CD8-positive, alpha-beta T cell (primary cell): ENCODE measurements at regions of chr19 and their contacts with region 1.

Region 1: GRCh38 chr19:1074544-1075283 is 7.7 kb downstream of the ARHGAP45 start:
- DNase-seq: peak; percentile 90 to 100 (median 97)
- ATAC-seq: peak; percentile 27
- H3K4me3 ChIP-seq: peak overlapping the region; percentile 40 to 63
- H3K4me3 Mint-ChIP-seq: peak overlapping the region; percentile 79
- H3K27ac ChIP-seq: peak overlapping the region; percentile 60 to 98
- H3K27ac Mint-ChIP-seq: peak overlapping the region; percentile 100
- H3K4me1 ChIP-seq: peaks cover 75% of the 10 kb centered on the region
- H3K4me1 Mint-ChIP-seq: peaks cover 51% of the 10 kb centered on the region
- H3K27me3 ChIP-seq: no peaks in the 10 kb centered on the region
- H3K27me3 Mint-ChIP-seq: no peaks in the 10 kb centered on the region
- CTCF ChIP-seq: no peak

Region 2: DNA sequence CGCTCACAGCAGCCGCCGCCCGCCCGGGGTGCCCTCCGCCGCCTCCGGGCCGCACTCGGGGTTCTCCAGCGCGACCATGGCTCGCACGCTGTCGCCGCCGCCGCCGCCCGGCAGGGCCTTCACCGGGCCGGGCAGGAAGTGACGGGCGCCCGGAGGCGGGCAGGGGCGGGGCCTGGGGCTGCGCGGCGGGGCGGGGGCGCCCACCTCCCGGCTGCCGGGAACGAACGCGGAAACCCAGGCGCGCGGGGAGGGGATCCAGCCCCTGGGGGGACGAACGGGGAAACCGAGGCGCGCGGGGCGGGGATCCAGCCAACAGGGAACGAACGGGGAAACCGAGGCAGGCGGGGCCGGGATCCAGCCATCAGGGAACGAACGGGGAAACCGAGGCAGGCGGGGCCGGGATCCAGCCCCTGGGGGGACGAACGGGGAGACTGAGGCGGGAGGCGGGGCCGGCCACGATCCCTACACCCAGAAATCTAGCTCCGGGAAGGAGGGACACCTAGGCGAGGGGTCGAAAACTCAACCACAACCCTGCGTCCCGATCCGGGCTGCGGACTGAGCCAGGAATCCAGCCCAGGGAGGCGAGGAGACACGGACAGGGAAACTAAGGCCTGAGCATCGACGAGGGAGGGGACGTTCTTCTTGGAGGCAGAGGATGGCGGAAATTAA is 161.5 kb before region 1 on chr19 and contains the start of gene R3HDM4:
- CTCF ChIA-PET with region 1: no interaction called
- POLR2A ChIA-PET with region 1: no interaction called
- intact Hi-C with region 1: loop called (anchors 5 kb)
- DNase-seq: peak; percentile 61 to 92 (median 85)
- ATAC-seq: peak; percentile 46
- H3K4me3 ChIP-seq: peak within 1 kb of the TSS; percentile 83 to 94
- H3K4me3 Mint-ChIP-seq: peak within 1 kb of the TSS; percentile 83
- H3K27ac ChIP-seq: peak within 1 kb of the TSS; percentile 85 to 98
- H3K27ac Mint-ChIP-seq: peak within 1 kb of the TSS; percentile 95
- H3K4me1 ChIP-seq: peaks cover 46% of the 10 kb centered on the region
- H3K4me1 Mint-ChIP-seq: peaks cover 32% of the 10 kb centered on the region
- H3K27me3 ChIP-seq: peaks cover 0 to 21% of the 10 kb centered on the region in 2 experiments
- H3K27me3 Mint-ChIP-seq: peaks cover 3% of the 10 kb centered on the region
- CTCF ChIP-seq: no peak
- total RNA-seq, gene R3HDM4: 242 to 261 TPM

Region 3: DNA sequence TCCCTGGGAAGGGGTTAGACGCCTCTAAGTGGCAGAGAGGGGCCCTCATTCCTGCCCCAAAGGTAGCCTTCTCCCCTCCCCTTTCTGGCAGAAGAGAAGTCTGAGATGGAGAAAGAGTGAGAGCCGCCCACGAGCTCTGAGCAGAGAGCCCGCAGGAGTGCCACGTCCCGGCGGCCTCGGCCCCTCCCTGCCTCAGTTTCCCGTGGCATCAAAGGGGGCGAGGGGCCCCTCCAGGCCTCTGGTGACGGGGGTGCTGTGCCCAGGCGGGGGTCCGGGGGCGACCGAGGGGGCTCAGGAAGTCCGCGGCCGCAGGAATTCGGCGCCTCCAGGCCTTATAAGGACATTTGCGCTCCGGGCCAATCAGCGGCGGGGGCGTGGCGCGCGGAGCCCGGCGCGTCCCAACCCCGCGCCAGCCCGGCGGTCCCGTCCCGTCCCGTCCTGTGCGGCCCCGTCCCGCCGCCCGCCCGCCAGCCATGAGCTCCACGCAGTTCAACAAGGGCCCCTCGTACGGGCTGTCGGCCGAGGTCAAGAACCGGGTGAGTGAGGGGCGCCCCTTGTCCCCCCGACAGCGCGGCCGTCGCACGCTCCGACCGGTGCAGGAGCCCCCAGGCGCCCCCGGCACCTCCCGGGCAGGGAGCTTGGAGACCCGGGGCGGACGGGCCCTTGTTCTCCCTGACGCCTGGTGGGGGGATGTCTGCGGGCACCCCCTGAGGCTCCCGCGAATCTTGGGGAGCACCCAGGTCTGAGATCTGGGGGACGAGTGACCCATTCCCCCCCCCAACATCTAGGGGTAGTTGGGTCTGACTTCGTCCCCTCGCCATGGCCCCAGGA is 48.3 kb before region 1 on chr19 and contains the start of gene CNN2:
- CTCF ChIA-PET with region 1: interaction called, 44 read pairs
- POLR2A ChIA-PET with region 1: interaction called, 647 read pairs
- intact Hi-C with region 1: loop called (anchors 2 kb)
- DNase-seq: peak in 8 of 9 experiments; percentile 48 to 83 (median 68)
- ATAC-seq: peak; percentile 12
- H3K4me3 ChIP-seq: peak within 1 kb of the TSS; percentile 98 to 100
- H3K4me3 Mint-ChIP-seq: peak within 1 kb of the TSS; percentile 96
- H3K27ac ChIP-seq: peak within 1 kb of the TSS; percentile 74 to 82
- H3K27ac Mint-ChIP-seq: peak within 1 kb of the TSS; percentile 95
- H3K4me1 ChIP-seq: peaks cover 27% of the 10 kb centered on the region
- H3K4me1 Mint-ChIP-seq: peaks cover 31% of the 10 kb centered on the region
- H3K27me3 ChIP-seq: no peaks in the 10 kb centered on the region
- H3K27me3 Mint-ChIP-seq: no peaks in the 10 kb centered on the region
- CTCF ChIP-seq: no peak
- total RNA-seq, gene CNN2: 382 to 392 TPM

Region 4: DNA sequence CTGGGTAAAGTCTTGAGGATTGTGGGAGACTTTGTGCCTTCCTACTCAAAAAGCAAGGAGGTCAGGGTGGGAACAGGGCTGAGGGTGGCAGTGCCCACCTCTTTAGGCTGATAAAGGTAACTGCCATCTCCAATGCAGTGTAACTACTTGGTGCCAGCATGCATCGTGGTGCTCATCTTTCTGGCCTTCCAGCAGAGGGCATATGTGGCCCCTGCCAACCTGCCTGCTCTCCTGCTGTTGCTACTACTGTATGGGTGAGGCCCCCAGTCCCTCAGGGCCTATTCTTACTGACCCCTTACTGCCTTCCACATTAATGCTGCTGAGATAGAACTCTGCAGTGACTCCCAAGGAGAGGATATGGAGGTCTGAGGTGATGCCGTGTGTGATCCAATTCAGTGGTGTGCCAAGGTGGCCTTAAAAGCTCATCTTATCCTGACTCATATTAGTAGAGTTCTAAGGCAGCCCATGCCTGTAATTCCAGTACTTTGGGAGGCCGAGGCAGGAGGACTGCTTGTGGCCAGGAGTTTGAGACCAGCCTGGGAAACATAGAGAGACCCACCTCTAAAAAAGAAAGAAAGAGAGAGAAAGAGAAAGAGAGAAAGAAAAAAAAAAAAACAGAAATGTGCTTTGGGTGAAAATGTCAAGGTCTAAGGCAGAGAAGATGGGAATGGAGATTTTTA is 17.4 kb before region 1 on chr19:
- CTCF ChIA-PET with region 1: no interaction called
- POLR2A ChIA-PET with region 1: interaction called, 15 read pairs
- intact Hi-C with region 1: no loop called
- DNase-seq: peak in 3 of 9 experiments; percentile 53 to 76 (median 68)
- ATAC-seq: peak; percentile 61
- H3K4me3 ChIP-seq: no peak overlapping the region
- H3K4me3 Mint-ChIP-seq: no peak overlapping the region
- H3K27ac ChIP-seq: peak overlapping the region in 1 of 2 experiments; percentile 43
- H3K27ac Mint-ChIP-seq: peak overlapping the region; percentile 71
- H3K4me1 ChIP-seq: peaks cover 23% of the 10 kb centered on the region
- H3K4me1 Mint-ChIP-seq: peaks cover 24% of the 10 kb centered on the region
- H3K27me3 ChIP-seq: no peaks in the 10 kb centered on the region
- H3K27me3 Mint-ChIP-seq: no peaks in the 10 kb centered on the region
- CTCF ChIP-seq: no peak

Region 5: GRCh38 chr19:1094975-1095701 is 20.4 kb after region 1 on chr19 and contains the start of gene POLR2E:
- CTCF ChIA-PET with region 1: interaction called, 80 read pairs
- POLR2A ChIA-PET with region 1: interaction called, 1,023 read pairs
- intact Hi-C with region 1: loop called in 1 of 2 experiments (anchors 2 kb)
- DNase-seq: peak; percentile 97 to 99 (median 99)
- ATAC-seq: peak; percentile 93
- H3K4me3 ChIP-seq: peak within 1 kb of the TSS; percentile 79 to 86
- H3K4me3 Mint-ChIP-seq: peak within 1 kb of the TSS; percentile 94
- H3K27ac ChIP-seq: peak within 1 kb of the TSS; percentile 58 to 64
- H3K27ac Mint-ChIP-seq: peak within 1 kb of the TSS; percentile 90
- H3K4me1 ChIP-seq: peaks cover 51% of the 10 kb centered on the region
- H3K4me1 Mint-ChIP-seq: peaks cover 41% of the 10 kb centered on the region
- H3K27me3 ChIP-seq: no peaks in the 10 kb centered on the region
- H3K27me3 Mint-ChIP-seq: no peaks in the 10 kb centered on the region
- CTCF ChIP-seq: no peak
- total RNA-seq, gene POLR2E: 75.3 to 76.2 TPM

Region 6: DNA sequence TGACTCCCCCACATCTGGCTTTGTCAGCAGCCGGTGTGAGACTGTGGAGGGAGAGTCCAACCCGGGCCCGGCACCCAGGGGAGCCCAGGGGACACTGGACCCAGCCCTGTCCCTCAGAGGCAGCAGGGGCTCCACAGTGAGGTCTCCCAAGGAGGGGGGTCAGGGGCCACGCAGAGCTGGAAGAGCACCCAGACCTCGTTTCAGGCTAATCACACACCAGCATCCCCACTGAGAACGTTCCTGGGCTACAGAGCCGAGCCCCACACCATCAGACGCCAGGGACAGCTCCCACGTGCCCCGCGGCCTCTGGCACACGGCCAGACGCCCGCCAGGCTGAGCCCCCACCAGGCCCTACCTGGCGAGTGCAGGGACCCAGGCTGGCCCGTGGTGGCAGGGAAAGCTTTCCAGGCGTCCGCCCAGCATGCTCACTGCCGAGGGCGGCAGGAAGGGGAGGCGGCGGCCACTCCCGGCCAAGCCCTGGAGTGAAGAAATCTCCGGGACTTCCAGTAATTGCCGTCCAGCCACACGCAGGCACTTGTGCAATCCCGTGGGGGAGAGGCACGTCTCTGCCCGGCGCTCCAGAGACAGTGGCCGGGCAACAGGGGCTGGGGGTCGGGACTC is 80.1 kb after region 1 on chr19:
- CTCF ChIA-PET with region 1: no interaction called
- POLR2A ChIA-PET with region 1: no interaction called
- intact Hi-C with region 1: no loop called
- DNase-seq: no peak
- ATAC-seq: no peak
- H3K4me3 ChIP-seq: no peak overlapping the region
- H3K4me3 Mint-ChIP-seq: no peak overlapping the region
- H3K27ac ChIP-seq: no peak overlapping the region
- H3K27ac Mint-ChIP-seq: peak overlapping the region; percentile 41
- H3K4me1 ChIP-seq: no peaks in the 10 kb centered on the region
- H3K4me1 Mint-ChIP-seq: no peaks in the 10 kb centered on the region
- H3K27me3 ChIP-seq: no peaks in the 10 kb centered on the region
- H3K27me3 Mint-ChIP-seq: no peaks in the 10 kb centered on the region
- CTCF ChIP-seq: no peak